Tibial artery (tissue), 4 donors: ENCODE measurements at regions of chr1 and their contacts with region 1.

Region 1: DNA sequence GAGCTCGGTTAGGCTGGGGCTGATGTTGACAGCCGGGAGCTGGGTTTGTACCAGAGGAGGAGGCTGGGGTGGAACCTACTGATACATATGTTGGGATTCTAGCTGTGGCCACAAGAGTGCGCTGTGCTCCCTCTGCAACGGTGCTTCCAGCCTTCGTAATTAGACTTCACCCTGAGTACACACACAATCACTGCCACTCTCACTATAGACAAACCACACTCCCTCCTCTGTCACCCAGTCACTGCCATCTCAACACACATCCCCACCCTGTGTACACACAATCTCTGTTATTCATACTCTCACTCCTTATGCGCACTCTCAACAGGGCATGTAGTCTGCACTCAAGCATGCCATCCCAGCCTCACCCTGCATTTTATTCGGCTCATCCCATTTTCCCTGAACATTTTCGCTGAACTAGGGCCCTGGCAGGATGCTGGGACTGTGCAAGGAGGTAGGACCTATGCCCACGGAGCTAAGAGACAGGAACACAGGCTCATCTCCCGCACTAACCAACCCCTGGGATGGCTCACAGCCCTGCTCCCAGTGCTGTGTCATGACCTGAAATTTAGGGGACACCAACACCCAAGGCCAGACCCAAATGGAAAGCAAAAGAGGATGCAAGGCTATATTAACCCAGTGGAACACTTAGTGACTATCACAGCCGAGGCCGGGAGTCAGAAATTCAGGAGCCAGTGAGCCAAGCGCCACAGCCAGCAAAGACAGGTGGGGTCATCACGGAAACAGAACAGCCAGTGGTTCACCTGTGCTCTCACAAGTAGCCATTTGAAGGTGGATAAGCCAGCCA is 5.7 kb downstream of the GJB3 start:
- DNase-seq: peak; percentile 66 to 86
- H3K4me3 ChIP-seq: no peak overlapping the region
- H3K27ac ChIP-seq: peak overlapping the region; percentile 59 to 93
- H3K4me1 ChIP-seq: peaks cover 0 to 59% (median 41%) of the 10 kb centered on the region in 4 donors
- H3K27me3 ChIP-seq: peaks cover 5 to 14% of the 10 kb centered on the region in 2 donors
- CTCF ChIP-seq: peak; percentile 88 to 89

Region 2: DNA sequence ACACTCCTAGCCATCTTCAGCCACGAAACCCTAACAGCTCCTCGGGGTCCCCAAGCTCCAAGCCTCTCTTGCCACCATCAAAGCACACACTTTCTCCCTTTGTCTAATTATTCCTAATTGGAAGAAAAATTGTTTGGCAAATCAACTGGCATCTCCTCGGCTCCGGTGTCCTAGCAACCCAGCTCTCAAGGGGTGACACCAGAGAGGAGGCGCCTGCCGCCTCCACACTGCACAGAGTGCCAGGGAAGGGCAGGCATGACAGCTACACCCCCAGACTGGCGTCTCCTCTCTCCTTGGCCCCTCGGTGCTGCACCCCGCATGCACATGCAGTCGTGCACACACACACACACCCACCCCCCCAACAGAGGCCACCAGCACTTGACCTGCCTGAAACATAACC is 50.0 kb before region 1 on chr1:
- intact Hi-C with region 1: no loop called
- DNase-seq: no peak
- H3K4me3 ChIP-seq: no peak overlapping the region
- H3K27ac ChIP-seq: no peak overlapping the region
- H3K4me1 ChIP-seq: no peaks in the 10 kb centered on the region
- H3K27me3 ChIP-seq: peaks cover 0 to 7% of the 10 kb centered on the region in 2 donors
- CTCF ChIP-seq: no peak

Region 3: DNA sequence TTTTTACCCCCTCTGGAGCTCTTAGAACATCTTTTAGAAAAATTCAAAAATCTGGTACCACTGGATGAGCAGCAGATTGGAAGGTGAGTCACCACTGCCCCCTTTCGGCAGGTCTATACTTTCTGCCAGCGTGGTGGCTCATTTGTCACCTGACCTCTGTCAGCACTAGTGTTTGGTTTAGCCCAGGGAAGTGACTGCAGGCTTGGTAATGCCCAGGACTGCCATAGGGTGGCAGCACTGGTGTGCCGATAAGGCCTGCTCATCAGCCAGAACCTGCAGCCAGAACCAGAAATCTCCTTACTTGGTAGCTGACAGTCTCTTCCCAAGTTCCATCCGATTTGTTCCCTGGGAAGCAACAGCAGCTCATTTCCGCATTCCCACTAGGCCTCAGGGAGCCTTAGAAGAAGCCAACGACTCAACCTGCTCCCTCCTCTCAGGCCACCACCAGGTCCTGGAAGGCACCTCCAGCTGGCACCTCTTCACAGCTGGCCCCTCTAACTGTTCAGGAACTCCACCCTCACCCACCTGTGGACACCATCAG is 66.0 kb after region 1 on chr1:
- intact Hi-C with region 1: loop called (anchors 2 kb)
- DNase-seq: peak; percentile 90 to 98
- H3K4me3 ChIP-seq: no peak overlapping the region
- H3K27ac ChIP-seq: peak overlapping the region; percentile 79 to 85
- H3K4me1 ChIP-seq: peaks cover 3 to 77% (median 46%) of the 10 kb centered on the region in 4 donors
- H3K27me3 ChIP-seq: no peaks in the 10 kb centered on the region
- CTCF ChIP-seq: peak; percentile 99 to 100